OCI-LY7 (cell line): ENCODE measurements at regions of chr12 and their contacts with region 1.

Region 1: DNA sequence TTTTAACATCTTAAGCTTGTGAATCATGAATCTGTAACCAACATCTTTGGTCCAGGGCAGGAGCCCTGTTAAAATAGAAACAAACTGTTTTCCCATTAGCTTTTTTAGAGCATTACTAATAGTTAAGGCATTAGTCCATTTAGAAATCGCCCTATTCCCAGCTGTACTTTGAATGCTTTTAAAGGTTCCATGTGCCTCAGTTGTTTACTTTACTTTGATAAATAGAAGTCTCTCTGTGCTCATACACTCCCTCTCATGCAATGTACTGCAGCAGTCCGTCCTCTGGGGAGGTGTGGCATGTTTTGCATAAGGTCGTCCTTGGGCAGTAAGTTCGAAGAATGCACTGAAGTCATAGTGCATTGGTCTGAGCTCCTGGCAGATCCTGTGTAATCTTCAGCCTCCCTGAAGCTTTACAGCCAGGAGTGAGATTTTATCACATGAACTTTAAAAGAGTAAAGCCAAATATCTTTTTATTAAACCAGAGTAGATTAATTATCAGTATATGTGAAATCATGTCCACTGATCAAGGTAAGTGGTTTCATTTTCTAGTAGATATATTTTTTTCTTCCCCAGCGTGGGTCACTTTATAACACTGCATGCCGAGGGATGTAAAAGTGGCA is 134.7 kb downstream of the FGD4 start:
- DNase-seq: peak; percentile 85
- H3K4me3 ChIP-seq: peak overlapping the region; percentile 74
- H3K27ac ChIP-seq: peak overlapping the region; percentile 67
- H3K4me1 ChIP-seq: peaks cover 48% of the 10 kb centered on the region
- CTCF ChIP-seq: no peak

Region 2: GRCh38 chr12:32264961-32265360 is 269.1 kb before region 1 on chr12:
- CTCF ChIA-PET with region 1: no interaction called
- POLR2A ChIA-PET with region 1: no interaction called
- intact Hi-C with region 1: loop called (anchors 5 kb)
- DNase-seq: peak; percentile 96
- H3K4me3 ChIP-seq: peak overlapping the region; percentile 56
- H3K27ac ChIP-seq: peak overlapping the region; percentile 99
- H3K4me1 ChIP-seq: peaks cover 95% of the 10 kb centered on the region
- CTCF ChIP-seq: no peak

Region 3: GRCh38 chr12:32467959-32468863 is 65.9 kb before region 1 on chr12:
- CTCF ChIA-PET with region 1: no interaction called
- POLR2A ChIA-PET with region 1: interaction called, 10 read pairs
- intact Hi-C with region 1: no loop called
- DNase-seq: peak; percentile 80
- H3K4me3 ChIP-seq: peak overlapping the region; percentile 52
- H3K27ac ChIP-seq: peak overlapping the region; percentile 94
- H3K4me1 ChIP-seq: peaks cover 45% of the 10 kb centered on the region
- CTCF ChIP-seq: no peak

Region 4: GRCh38 chr12:32482226-32482625 is 51.9 kb before region 1 on chr12:
- CTCF ChIA-PET with region 1: interaction called, 4 read pairs
- POLR2A ChIA-PET with region 1: interaction called, 24 read pairs
- intact Hi-C with region 1: no loop called
- DNase-seq: peak; percentile 87
- H3K4me3 ChIP-seq: peak overlapping the region; percentile 57
- H3K27ac ChIP-seq: peak overlapping the region; percentile 83
- H3K4me1 ChIP-seq: peaks cover 78% of the 10 kb centered on the region
- CTCF ChIP-seq: no peak

Region 5: GRCh38 chr12:32522331-32523221 is 11.5 kb before region 1 on chr12:
- CTCF ChIA-PET with region 1: interaction called, 3 read pairs
- POLR2A ChIA-PET with region 1: interaction called, 66 read pairs
- intact Hi-C with region 1: no loop called
- DNase-seq: peak; percentile 75
- H3K4me3 ChIP-seq: peak overlapping the region; percentile 47
- H3K27ac ChIP-seq: peak overlapping the region; percentile 92
- H3K4me1 ChIP-seq: peaks cover 67% of the 10 kb centered on the region
- CTCF ChIP-seq: no peak

Region 6: DNA sequence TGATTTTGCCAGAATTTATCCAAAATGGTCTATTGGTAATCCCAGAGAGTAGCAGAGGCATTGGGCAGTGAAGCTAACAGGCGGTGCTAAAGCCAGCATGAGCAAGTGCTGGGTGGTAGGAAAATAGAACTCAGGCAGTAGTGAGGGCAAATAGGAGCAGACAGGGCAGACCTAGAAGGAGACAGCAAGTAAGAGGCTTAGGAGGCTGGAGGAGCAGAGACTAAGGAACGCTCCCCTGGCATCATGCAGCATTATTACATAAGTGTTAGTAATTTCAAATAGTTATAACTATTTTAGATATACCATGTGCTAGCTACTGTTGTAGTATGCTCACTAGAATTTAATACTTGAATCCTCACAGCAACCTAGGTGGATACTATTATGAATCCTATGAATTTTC is 17.0 kb after region 1 on chr12:
- CTCF ChIA-PET with region 1: no interaction called
- POLR2A ChIA-PET with region 1: interaction called, 65 read pairs
- intact Hi-C with region 1: no loop called
- DNase-seq: no peak
- H3K4me3 ChIP-seq: peak overlapping the region; percentile 53
- H3K27ac ChIP-seq: peak overlapping the region; percentile 84
- H3K4me1 ChIP-seq: peaks cover 63% of the 10 kb centered on the region
- CTCF ChIP-seq: no peak

Region 7: GRCh38 chr12:32659908-32660440 is 125.9 kb after region 1 on chr12:
- CTCF ChIA-PET with region 1: interaction called, 3 read pairs
- POLR2A ChIA-PET with region 1: no interaction called
- intact Hi-C with region 1: loop called (anchors 5 kb)
- DNase-seq: no peak
- H3K4me3 ChIP-seq: no peak overlapping the region
- H3K27ac ChIP-seq: no peak overlapping the region
- H3K4me1 ChIP-seq: peaks cover 6% of the 10 kb centered on the region
- CTCF ChIP-seq: no peak